ENCODE measurements at regions of chr20 and their contacts with region 1.

Region 1: GRCh38 chr20:16801919-16802911 is 54.1 kb downstream of the OTOR start:
- DNase-seq: peak in 2 of 3 donors; percentile 54 to 82
- ATAC-seq: peak; percentile 38
- H3K4me3 ChIP-seq: no peak overlapping the region
- H3K4me1 ChIP-seq: no peaks in the 10 kb centered on the region
- CTCF ChIP-seq: peak; percentile 78

Region 2: DNA sequence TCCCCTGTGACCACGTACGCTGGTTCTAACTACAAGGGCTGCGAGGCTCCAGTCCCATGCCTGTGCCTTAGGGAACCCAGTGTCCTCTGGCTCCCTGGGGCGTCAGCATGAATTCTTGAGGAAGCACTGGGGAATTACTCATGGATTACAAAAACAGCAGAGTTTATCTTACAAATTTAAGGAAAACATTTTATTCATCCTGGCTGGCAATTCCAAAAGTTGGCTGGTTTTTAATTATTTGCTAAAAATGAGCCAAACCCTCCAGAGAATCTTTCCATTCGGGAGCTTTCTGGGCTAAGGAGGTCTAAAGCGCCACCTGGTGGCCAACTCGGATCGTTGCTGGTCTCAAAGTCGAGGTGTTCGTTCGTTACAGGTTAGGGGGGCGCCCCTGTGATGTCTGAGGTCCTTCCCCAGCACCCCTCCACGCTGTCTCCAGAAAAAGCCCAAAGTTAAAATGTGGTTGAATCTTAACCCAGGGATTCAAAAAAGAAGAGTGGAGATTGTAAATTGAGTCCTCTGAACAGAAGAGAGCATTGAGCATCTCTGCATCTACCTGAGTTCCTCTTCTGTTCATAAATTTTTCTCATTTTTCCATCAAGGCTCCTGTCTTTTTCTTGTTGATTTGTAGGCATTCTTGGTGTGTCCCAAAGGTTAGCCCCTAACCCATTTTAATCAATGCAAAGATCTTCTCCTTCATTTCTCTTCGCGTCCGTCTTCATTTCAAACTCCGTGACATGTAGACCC is 629.6 kb after region 1 on chr20:
- intact Hi-C with region 1: loop called (anchors 2 to 5 kb)
- DNase-seq: peak in 2 of 3 donors; percentile 46 to 51
- ATAC-seq: no peak
- H3K4me3 ChIP-seq: no peak overlapping the region
- H3K4me1 ChIP-seq: no peaks in the 10 kb centered on the region
- CTCF ChIP-seq: peak; percentile 70

Measured in mucosa of descending colon (tissue), 3 donors.